Endothelial cell of umbilical vein (primary cell): ENCODE measurements at regions of chr1 and their contacts with region 1.

Region 1: DNA sequence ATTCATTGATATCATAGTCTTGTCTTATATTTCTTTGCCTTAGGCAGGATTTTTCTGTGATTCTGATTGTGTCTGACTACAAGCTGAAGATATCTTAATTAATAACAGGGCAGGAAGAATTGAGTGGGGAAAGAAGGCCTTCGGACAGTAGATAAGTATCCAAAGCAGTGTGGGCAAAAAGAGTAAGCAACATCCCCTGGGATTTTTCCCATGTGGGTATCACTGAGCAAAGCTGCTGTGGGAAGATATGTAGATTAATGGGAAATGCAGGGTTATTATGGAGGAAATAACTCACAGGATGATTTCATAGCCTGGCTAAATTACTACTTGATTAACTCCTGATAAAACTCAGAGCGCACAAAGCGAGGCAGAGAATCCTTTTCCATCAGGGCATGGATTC is 55.7 kb downstream of the RGS5 start:
- DNase-seq: peak; percentile 90
- H3K4me3 ChIP-seq: no peak overlapping the region
- H3K27ac ChIP-seq: peak overlapping the region; percentile 72
- H3K4me1 ChIP-seq: peaks cover 13% of the 10 kb centered on the region
- H3K27me3 ChIP-seq: no peaks in the 10 kb centered on the region
- CTCF ChIP-seq: no peak
- POLR2A ChIP-seq: no peak

Region 2: GRCh38 chr1:163063143-163063542 is 83.9 kb before region 1 on chr1:
- CTCF ChIA-PET with region 1: no interaction called
- POLR2A ChIA-PET with region 1: no interaction called
- dilution Hi-C with region 1: no loop called
- intact Hi-C with region 1: no loop called
- DNase-seq: no peak
- H3K4me3 ChIP-seq: no peak overlapping the region
- H3K27ac ChIP-seq: no peak overlapping the region
- H3K4me1 ChIP-seq: no peaks in the 10 kb centered on the region
- H3K27me3 ChIP-seq: no peaks in the 10 kb centered on the region
- CTCF ChIP-seq: no peak
- POLR2A ChIP-seq: no peak

Region 3: DNA sequence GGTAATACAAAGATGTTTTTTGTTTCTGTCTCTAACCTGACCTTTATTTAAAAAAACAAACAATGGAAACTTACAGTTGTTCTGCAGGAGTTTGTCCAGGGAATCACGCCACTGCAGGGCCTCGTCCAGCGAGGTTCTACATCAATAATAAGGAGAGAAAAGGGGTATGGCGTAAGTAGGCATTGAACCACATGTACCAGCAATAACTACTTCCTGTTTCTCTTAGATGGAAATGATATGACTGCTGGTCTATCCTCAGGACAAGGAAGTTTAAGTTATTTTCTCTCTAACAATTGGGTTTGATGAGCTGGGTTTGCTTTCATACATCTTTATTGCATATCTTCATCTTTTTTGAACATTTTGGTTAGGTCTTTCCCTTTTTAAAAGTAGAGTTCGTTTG is 14.8 kb after region 1 on chr1:
- CTCF ChIA-PET with region 1: interaction called, 12 read pairs
- POLR2A ChIA-PET with region 1: no interaction called
- dilution Hi-C with region 1: no loop called
- intact Hi-C with region 1: loop called (anchors 1 kb)
- DNase-seq: peak; percentile 47
- H3K4me3 ChIP-seq: no peak overlapping the region
- H3K27ac ChIP-seq: peak overlapping the region; percentile 28
- H3K4me1 ChIP-seq: peaks cover 57% of the 10 kb centered on the region
- H3K27me3 ChIP-seq: no peaks in the 10 kb centered on the region
- CTCF ChIP-seq: no peak
- POLR2A ChIP-seq: no peak